CD14-positive monocyte (primary cell): ENCODE measurements at regions of chr14 and their contacts with region 1.

Region 1: DNA sequence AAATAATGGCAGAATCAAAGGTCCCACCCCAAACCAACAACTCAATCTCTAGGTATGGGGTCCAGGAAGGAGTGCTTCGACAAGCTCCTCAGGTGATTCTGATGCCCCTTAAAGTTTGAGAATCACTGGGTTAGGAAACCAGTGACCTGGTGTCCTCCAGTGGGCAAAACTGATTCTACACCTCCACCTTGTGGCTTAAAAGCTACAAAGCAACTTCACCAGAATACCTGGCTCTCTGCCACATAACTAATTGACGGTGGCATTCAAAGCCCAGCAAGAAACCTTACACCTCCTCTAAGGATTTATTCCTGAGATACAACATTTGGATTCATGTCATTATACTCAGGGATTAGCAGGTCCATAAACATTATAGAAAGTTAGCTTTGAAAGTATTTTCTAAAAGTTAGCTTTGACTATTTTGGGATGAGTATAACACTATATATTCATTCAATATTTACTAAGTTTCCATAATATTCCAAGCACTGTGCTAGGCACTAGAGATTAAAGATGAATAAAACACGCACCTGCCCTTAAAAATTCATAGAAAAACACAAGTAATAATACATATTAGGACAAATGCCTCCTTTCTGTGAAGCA is 45.4 kb downstream of the DCAF5 start:
- DNase-seq: peak; percentile 21 to 48 (median 40)
- H3K4me3 ChIP-seq: no peak overlapping the region
- H3K4me3 Mint-ChIP-seq: no peak overlapping the region
- H3K27ac ChIP-seq: no peak overlapping the region
- H3K27ac Mint-ChIP-seq: peak overlapping the region in 1 of 7 donors; percentile 46
- H3K4me1 ChIP-seq: no peaks in the 10 kb centered on the region
- H3K4me1 Mint-ChIP-seq: peaks cover 5% of the 10 kb centered on the region
- H3K27me3 ChIP-seq: no peaks in the 10 kb centered on the region
- H3K27me3 Mint-ChIP-seq: no peaks in the 10 kb centered on the region
- CTCF ChIP-seq: peak; percentile 64

Region 2: DNA sequence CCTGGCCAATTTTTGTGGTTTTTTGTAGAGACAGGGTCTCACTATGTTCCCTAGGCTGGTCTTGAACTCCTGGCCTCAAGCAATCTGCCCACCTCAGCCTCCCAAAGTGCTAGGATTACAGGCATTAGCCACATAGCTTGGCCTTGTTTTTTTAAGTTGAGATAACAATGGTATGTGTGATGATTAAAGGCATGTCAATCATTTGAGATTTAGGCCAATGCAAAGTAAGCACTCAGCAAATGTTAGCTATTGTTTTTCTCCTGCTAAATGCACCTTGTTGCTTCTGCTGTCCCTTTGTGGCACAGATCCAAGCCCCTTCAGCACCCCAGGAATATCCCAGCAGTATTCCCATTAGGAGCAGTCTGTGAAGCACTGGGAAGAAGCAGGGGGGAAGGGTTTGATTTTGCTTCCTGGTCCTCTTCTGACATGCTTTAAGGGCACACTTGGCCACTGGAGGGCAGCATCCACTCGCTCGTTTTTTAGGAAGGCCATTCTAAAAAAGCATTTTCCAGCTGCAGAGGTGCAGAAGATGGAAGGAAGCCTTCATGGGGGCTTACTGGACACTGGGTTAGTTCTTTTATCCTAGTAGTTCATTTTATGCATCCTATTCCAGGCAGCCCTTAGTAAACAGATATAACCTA is 244.4 kb before region 1 on chr14:
- intact Hi-C with region 1: loop called (anchors 2 to 5 kb)
- DNase-seq: peak; percentile 52 to 60 (median 57)
- H3K4me3 ChIP-seq: no peak overlapping the region
- H3K4me3 Mint-ChIP-seq: no peak overlapping the region
- H3K27ac ChIP-seq: no peak overlapping the region
- H3K27ac Mint-ChIP-seq: peak overlapping the region in 2 of 7 donors; percentile 15 to 50
- H3K4me1 ChIP-seq: no peaks in the 10 kb centered on the region
- H3K4me1 Mint-ChIP-seq: peaks cover 3% of the 10 kb centered on the region
- H3K27me3 ChIP-seq: no peaks in the 10 kb centered on the region
- H3K27me3 Mint-ChIP-seq: peaks cover 0 to 3% (median 2%) of the 10 kb centered on the region in 3 donors
- CTCF ChIP-seq: peak; percentile 74